CD4-positive, alpha-beta memory T cell (primary cell): ENCODE measurements at regions of chr5 and their contacts with region 1.

Region 1: DNA sequence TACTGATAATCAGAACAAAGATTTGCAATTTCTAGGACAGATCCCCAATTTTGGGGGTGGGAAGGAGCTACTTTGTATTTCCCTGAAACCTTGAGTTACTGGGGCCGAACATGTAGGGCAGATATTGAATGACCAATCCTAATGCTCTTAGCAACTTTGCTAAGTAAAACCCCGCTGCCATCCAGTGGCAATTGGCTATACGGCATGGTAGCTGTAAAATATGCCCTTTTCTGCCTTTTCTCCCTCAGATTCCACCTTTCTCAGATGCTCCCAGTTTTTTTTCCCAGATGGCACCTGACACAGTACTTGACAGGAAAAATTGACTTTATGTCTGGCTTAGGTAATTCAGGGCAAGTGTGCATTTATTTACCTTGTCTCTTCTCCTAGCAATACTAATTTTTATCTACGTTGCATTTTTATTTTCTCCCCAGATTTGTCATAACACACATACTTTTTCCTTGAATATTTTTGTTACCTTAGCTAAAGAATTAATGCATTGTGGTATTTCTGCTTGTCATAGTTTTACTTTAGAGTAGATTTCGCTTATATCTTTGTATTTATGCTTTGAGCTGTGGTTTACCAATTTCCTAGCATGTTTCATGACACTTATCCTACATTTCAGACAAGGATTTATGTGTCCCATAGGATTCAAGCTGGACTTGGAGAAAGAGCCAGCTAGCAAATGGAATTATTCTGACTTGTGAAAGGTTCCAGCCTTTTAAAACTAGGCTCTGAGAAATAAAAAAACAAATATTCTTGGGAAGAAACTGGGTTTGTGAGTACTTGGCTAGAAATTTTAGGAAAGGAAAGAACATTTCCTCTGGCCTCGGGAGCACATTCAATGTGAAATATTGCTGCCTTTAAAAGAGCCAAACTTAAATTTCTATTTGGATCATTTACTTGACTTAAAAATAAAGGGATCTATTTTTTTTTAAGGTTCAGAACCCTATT is 37.4 kb downstream of the PIK3R1 start:
- DNase-seq: peak in 3 of 5 donors; percentile 36 to 41 (median 38)
- H3K4me3 ChIP-seq: no peak overlapping the region
- H3K4me3 Mint-ChIP-seq: peak overlapping the region in 2 of 8 donors; percentile 52 to 66
- H3K27ac ChIP-seq: no peak overlapping the region
- H3K27ac Mint-ChIP-seq: peak overlapping the region in 5 of 7 donors; percentile 1 to 93 (median 62)
- H3K4me1 ChIP-seq: peaks cover 95% of the 10 kb centered on the region
- H3K4me1 Mint-ChIP-seq: peaks cover 79 to 97% (median 90%) of the 10 kb centered on the region in 4 donors
- H3K27me3 ChIP-seq: no peaks in the 10 kb centered on the region
- H3K27me3 Mint-ChIP-seq: no peaks in the 10 kb centered on the region

Region 2: DNA sequence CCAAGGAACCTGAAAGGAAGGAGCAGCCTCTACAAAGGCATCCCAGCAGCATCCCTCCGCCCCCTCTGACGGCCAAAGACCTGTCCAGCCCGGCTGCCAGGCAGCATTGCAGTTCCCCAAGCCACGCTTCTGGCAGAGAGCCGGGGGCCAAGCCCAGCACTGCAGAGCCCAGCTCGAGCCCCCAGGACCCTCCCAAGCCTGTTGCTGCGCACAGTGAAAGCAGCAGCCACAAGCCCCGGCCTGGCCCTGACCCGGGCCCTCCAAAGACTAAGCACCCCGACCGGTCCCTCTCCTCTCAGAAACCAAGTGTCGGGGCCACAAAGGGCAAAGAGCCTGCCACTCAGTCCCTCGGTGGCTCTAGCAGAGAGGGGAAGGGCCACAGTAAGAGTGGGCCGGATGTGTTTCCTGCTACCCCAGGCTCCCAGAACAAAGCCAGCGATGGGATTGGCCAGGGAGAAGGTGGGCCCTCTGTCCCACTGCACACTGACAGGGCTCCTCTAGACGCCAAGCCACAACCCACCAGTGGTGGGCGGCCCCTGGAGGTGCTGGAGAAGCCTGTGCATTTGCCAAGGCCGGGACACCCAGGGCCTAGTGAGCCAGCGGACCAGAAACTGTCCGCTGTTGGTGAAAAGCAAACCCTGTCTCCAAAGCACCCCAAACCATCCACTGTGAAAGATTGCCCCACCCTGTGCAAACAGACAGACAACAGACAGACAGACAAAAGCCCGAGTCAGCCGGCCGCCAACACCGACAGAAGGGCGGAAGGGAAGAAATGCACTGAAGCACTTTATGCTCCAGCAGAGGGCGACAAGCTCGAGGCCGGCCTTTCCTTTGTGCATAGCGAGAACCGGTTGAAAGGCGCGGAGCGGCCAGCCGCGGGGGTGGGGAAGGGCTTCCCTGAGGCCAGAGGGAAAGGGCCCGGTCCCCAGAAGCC is 1087.2 kb before region 1 on chr5:
- CTCF ChIA-PET with region 1: interaction called, 5 read pairs
- POLR2A ChIA-PET with region 1: interaction called, 3 read pairs
- intact Hi-C with region 1: loop called (anchors 10 kb)
- DNase-seq: peak; percentile 80 to 86 (median 81)
- H3K4me3 ChIP-seq: peak overlapping the region; percentile 65 to 66
- H3K4me3 Mint-ChIP-seq: peak overlapping the region; percentile 89 to 96 (median 92)
- H3K27ac ChIP-seq: peak overlapping the region; percentile 86
- H3K27ac Mint-ChIP-seq: peak overlapping the region in 6 of 7 donors; percentile 97 to 98 (median 97)
- H3K4me1 ChIP-seq: peaks cover 94% of the 10 kb centered on the region
- H3K4me1 Mint-ChIP-seq: peaks cover 47 to 80% (median 65%) of the 10 kb centered on the region in 4 donors
- H3K27me3 ChIP-seq: no peaks in the 10 kb centered on the region
- H3K27me3 Mint-ChIP-seq: no peaks in the 10 kb centered on the region

Region 3: GRCh38 chr5:67493676-67494075 is 759.3 kb before region 1 on chr5:
- CTCF ChIA-PET with region 1: interaction called, 14 read pairs
- POLR2A ChIA-PET with region 1: no interaction called
- intact Hi-C with region 1: loop called (anchors 2 kb)
- DNase-seq: peak in 1 of 5 donors; percentile 9
- H3K4me3 ChIP-seq: no peak overlapping the region
- H3K4me3 Mint-ChIP-seq: no peak overlapping the region
- H3K27ac ChIP-seq: no peak overlapping the region
- H3K27ac Mint-ChIP-seq: peak overlapping the region in 1 of 7 donors; percentile 62
- H3K4me1 ChIP-seq: no peaks in the 10 kb centered on the region
- H3K4me1 Mint-ChIP-seq: peaks cover 0 to 5% (median 0%) of the 10 kb centered on the region in 4 donors
- H3K27me3 ChIP-seq: no peaks in the 10 kb centered on the region
- H3K27me3 Mint-ChIP-seq: no peaks in the 10 kb centered on the region

Region 4: GRCh38 chr5:68170826-68171558 is 82.0 kb before region 1 on chr5:
- CTCF ChIA-PET with region 1: no interaction called
- POLR2A ChIA-PET with region 1: no interaction called
- intact Hi-C with region 1: no loop called
- DNase-seq: no peak
- H3K4me3 ChIP-seq: no peak overlapping the region
- H3K4me3 Mint-ChIP-seq: no peak overlapping the region
- H3K27ac ChIP-seq: no peak overlapping the region
- H3K27ac Mint-ChIP-seq: no peak overlapping the region
- H3K4me1 ChIP-seq: no peaks in the 10 kb centered on the region
- H3K4me1 Mint-ChIP-seq: no peaks in the 10 kb centered on the region
- H3K27me3 ChIP-seq: no peaks in the 10 kb centered on the region
- H3K27me3 Mint-ChIP-seq: no peaks in the 10 kb centered on the region

Region 5: DNA sequence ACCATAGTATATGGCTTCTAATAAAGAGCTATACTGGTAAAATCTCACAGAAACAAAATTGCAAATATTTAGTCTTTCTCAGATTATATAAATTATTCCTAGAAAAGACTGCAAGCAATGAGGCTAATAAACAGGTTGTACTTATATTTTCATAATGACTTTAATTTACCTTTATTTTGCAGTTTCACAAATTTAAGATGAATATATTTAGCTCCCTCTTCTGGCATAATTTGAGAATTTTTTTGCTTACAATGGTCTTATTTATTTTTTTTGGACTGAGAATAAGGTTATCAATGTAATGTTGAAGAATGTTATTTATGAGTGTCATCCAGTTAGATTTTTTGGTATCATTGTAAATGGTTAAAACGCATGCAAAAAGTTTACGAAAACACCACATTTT is 19.3 kb after region 1 on chr5:
- CTCF ChIA-PET with region 1: interaction called, 124 read pairs
- POLR2A ChIA-PET with region 1: interaction called, 179 read pairs
- intact Hi-C with region 1: loop called (anchors 1 kb)
- DNase-seq: peak in 2 of 5 donors; percentile 44 to 50
- H3K4me3 ChIP-seq: no peak overlapping the region
- H3K4me3 Mint-ChIP-seq: peak overlapping the region in 4 of 8 donors; percentile 15 to 46 (median 22)
- H3K27ac ChIP-seq: no peak overlapping the region
- H3K27ac Mint-ChIP-seq: peak overlapping the region; percentile 56 to 99 (median 80)
- H3K4me1 ChIP-seq: peaks cover 97% of the 10 kb centered on the region
- H3K4me1 Mint-ChIP-seq: peaks cover 66 to 95% (median 81%) of the 10 kb centered on the region in 4 donors
- H3K27me3 ChIP-seq: no peaks in the 10 kb centered on the region
- H3K27me3 Mint-ChIP-seq: no peaks in the 10 kb centered on the region

Region 6: GRCh38 chr5:68331192-68332079 is 78.5 kb after region 1 on chr5:
- CTCF ChIA-PET with region 1: no interaction called
- POLR2A ChIA-PET with region 1: no interaction called
- intact Hi-C with region 1: no loop called
- DNase-seq: no peak
- H3K4me3 ChIP-seq: no peak overlapping the region
- H3K4me3 Mint-ChIP-seq: no peak overlapping the region
- H3K27ac ChIP-seq: no peak overlapping the region
- H3K27ac Mint-ChIP-seq: peak overlapping the region in 1 of 7 donors; percentile 53
- H3K4me1 ChIP-seq: no peaks in the 10 kb centered on the region
- H3K4me1 Mint-ChIP-seq: peaks cover 0 to 7% (median 0%) of the 10 kb centered on the region in 4 donors
- H3K27me3 ChIP-seq: no peaks in the 10 kb centered on the region
- H3K27me3 Mint-ChIP-seq: peaks cover 7% of the 10 kb centered on the region in 2 donors